Activated naive CD4-positive, alpha-beta T cell treated with anti-CD3 and anti-CD28 coated beads for 36 hours (primary cell): ENCODE measurements at regions of chr15 and their contacts with region 1.

Region 1: GRCh38 chr15:63466378-63467192 is 37.8 kb upstream of the USP3 start:
- DNase-seq: peak; percentile 71
- H3K4me3 Mint-ChIP-seq: no peak overlapping the region
- H3K27ac Mint-ChIP-seq: no peak overlapping the region
- H3K4me1 Mint-ChIP-seq: peaks cover 23% of the 10 kb centered on the region
- H3K27me3 Mint-ChIP-seq: no peaks in the 10 kb centered on the region

Region 2: GRCh38 chr15:63256433-63257274 is 209.9 kb before region 1 on chr15:
- CTCF ChIA-PET with region 1: no interaction called
- intact Hi-C with region 1: no loop called
- DNase-seq: no peak
- H3K4me3 Mint-ChIP-seq: no peak overlapping the region
- H3K27ac Mint-ChIP-seq: no peak overlapping the region
- H3K4me1 Mint-ChIP-seq: peaks cover 12% of the 10 kb centered on the region
- H3K27me3 Mint-ChIP-seq: no peaks in the 10 kb centered on the region

Region 3: GRCh38 chr15:63497642-63498467 is 31.3 kb after region 1 on chr15:
- CTCF ChIA-PET with region 1: interaction called, 6 read pairs
- intact Hi-C with region 1: loop called (anchors 1 kb)
- DNase-seq: peak; percentile 81
- H3K4me3 Mint-ChIP-seq: no peak overlapping the region
- H3K27ac Mint-ChIP-seq: no peak overlapping the region
- H3K4me1 Mint-ChIP-seq: peaks cover 82% of the 10 kb centered on the region
- H3K27me3 Mint-ChIP-seq: no peaks in the 10 kb centered on the region

Region 4: DNA sequence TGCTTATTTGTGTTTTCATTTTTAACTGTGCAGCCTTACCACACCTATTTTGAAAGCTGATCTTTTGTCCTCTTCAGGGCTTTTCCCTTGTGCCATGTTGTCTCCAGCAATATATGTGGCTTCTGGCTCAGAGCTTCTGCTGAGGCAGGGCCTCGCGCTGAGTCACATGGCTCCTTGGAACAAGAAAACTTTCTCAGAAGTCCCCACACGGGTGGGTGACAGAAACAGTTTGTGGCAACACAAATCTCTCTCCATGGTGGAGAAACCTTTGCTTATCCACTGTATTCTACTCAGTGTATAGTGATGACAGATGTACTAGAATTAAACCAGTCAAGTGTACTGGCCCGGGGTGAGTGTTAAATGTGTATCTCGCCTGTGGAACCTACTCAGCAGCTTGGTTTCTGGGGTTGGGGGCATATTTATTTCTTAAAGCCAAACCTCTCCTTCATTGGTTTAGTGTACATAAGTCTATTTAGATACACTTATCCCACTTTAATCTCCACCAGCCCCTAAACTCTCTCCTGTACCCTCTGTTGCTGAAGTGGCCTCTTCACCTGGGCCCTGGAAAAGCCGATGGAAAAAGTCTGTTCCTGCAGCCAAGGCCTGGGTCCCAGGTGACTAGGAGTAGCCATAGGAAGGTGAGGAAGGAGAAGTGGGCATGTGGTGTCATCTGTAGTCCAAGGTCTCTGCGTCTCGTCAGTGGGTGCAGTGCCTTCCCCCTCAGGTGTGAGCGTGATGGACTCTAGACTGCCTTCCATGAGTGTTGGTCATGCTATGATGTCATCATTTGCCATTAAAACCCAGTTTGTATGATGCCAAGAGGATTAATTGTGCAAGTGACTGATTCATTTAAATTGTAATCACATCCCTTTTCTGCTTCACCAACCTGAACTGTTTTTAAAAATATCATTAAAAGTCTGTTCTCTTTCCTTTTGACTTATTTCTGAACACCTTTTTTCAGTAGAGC is 127.4 kb after region 1 on chr15:
- CTCF ChIA-PET with region 1: interaction called, 101 read pairs
- intact Hi-C with region 1: loop called (anchors 1 kb)
- DNase-seq: peak; percentile 64
- H3K4me3 Mint-ChIP-seq: no peak overlapping the region
- H3K27ac Mint-ChIP-seq: peak overlapping the region; percentile 70
- H3K4me1 Mint-ChIP-seq: peaks cover 68% of the 10 kb centered on the region
- H3K27me3 Mint-ChIP-seq: no peaks in the 10 kb centered on the region

Region 5: GRCh38 chr15:63600616-63601025 is 134.0 kb after region 1 on chr15:
- CTCF ChIA-PET with region 1: interaction called, 101 read pairs
- intact Hi-C with region 1: loop called (anchors 1 kb)
- DNase-seq: peak; percentile 87
- H3K4me3 Mint-ChIP-seq: peak overlapping the region; percentile 90
- H3K27ac Mint-ChIP-seq: peak overlapping the region; percentile 93
- H3K4me1 Mint-ChIP-seq: peaks cover 54% of the 10 kb centered on the region
- H3K27me3 Mint-ChIP-seq: no peaks in the 10 kb centered on the region

Region 6: DNA sequence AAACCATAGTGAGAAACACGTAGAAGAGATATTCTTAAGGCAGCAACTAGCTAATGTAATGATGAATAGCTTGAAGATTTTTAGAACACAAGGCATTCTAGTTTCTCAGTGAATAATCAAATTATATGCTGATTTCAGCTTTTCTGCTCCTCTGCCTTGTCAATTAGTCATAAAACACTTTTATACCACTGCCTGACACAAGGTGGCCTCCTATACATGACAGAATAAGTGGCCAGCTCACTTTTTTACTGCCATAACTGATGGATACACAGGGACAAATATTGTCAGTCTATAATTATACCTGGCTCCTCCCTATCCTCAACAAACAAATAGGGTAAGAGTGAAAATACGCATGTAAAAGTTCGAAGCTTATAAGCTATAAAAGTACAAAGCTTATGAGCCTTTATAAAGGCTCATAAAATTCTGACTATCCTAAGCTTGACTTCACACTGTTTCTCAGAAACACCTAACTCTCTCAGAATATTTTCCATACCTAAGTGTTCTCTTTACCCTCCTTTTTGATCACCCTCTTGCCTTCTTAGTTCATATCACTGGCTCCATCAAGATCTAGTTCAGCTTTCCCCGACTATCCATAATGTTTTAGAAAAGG is 285.6 kb after region 1 on chr15:
- CTCF ChIA-PET with region 1: no interaction called
- intact Hi-C with region 1: loop called (anchors 10 kb)
- DNase-seq: peak; percentile 60
- H3K4me3 Mint-ChIP-seq: no peak overlapping the region
- H3K27ac Mint-ChIP-seq: no peak overlapping the region
- H3K4me1 Mint-ChIP-seq: no peaks in the 10 kb centered on the region
- H3K27me3 Mint-ChIP-seq: no peaks in the 10 kb centered on the region

Region 7: GRCh38 chr15:63891079-63891767 is 424.6 kb after region 1 on chr15:
- CTCF ChIA-PET with region 1: no interaction called
- intact Hi-C with region 1: loop called (anchors 2 kb)
- DNase-seq: peak; percentile 86
- H3K4me3 Mint-ChIP-seq: no peak overlapping the region
- H3K27ac Mint-ChIP-seq: no peak overlapping the region
- H3K4me1 Mint-ChIP-seq: peaks cover 40% of the 10 kb centered on the region
- H3K27me3 Mint-ChIP-seq: no peaks in the 10 kb centered on the region

Region 8: DNA sequence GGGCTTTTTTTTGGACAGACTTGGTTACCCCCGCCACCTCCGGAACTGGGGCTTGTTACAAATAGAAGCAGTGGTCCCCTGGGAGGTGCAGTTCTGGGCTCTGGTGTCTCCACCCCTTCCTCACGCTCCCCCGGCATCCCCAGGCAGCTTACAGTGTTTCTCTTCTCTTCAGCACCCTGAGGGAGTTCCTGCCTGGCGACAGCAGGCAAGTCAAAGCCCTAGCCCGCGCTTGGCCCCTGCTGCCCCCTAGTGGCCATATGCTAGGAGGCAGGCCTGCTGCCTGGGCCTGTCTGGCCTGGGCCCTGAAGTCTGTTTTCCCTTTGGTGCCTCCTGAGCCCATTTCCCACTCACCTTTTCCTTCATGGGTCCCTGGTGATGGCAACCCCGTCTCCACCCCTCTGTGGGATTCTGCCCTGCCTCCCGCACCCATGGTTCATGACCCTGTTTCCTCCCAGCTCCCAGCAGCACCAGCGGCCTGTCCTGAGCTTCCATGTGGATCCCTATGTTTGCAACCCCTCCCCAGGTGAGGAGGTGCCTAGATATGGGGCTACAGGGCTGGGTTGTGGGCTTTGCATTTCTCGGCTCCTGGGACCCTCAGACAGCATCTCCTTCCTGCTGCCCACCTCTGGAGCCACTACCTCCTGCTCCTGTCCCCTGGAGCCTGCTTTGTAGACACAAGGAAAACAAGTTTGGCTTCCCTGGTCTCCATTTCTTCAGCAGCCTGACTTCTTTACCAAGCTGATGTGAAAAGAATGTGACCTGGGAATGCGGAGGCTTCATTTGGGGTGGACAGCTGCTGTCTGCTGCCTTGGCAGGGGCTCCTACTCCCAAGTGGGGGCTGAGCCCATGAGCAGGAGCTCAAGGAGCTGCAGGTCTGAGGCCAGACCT is 687.1 kb after region 1 on chr15:
- CTCF ChIA-PET with region 1: no interaction called
- intact Hi-C with region 1: loop called (anchors 5 kb)
- DNase-seq: peak; percentile 96
- H3K4me3 Mint-ChIP-seq: peak overlapping the region; percentile 50
- H3K27ac Mint-ChIP-seq: peak overlapping the region; percentile 67
- H3K4me1 Mint-ChIP-seq: peaks cover 26% of the 10 kb centered on the region
- H3K27me3 Mint-ChIP-seq: peaks cover 11% of the 10 kb centered on the region